Activated CD4-positive, alpha-beta memory T cell treated with anti-CD3 and anti-CD28 coated beads for 36 hours (primary cell): ENCODE measurements at regions of chr5 and their contacts with region 1.

Region 1: GRCh38 chr5:141878711-141879425 is 658 bp upstream of the PCDH1 start:
- DNase-seq: peak; percentile 92
- H3K4me3 Mint-ChIP-seq: peak overlapping the region; percentile 59
- H3K27ac Mint-ChIP-seq: no peak overlapping the region
- H3K4me1 Mint-ChIP-seq: peaks cover 22% of the 10 kb centered on the region
- H3K27me3 Mint-ChIP-seq: peaks cover 73% of the 10 kb centered on the region

Region 2: GRCh38 chr5:141618804-141619554 is 259.9 kb before region 1 on chr5 and contains the start of gene DIAPH1:
- CTCF ChIA-PET with region 1: no interaction called
- POLR2A ChIA-PET with region 1: no interaction called
- intact Hi-C with region 1: no loop called
- DNase-seq: peak; percentile 99
- H3K4me3 Mint-ChIP-seq: peak within 1 kb of the TSS; percentile 91
- H3K27ac Mint-ChIP-seq: peak within 1 kb of the TSS; percentile 98
- H3K4me1 Mint-ChIP-seq: peaks cover 57% of the 10 kb centered on the region
- H3K27me3 Mint-ChIP-seq: no peaks in the 10 kb centered on the region
- total RNA-seq, gene DIAPH1: 225 to 227 TPM

Region 3: DNA sequence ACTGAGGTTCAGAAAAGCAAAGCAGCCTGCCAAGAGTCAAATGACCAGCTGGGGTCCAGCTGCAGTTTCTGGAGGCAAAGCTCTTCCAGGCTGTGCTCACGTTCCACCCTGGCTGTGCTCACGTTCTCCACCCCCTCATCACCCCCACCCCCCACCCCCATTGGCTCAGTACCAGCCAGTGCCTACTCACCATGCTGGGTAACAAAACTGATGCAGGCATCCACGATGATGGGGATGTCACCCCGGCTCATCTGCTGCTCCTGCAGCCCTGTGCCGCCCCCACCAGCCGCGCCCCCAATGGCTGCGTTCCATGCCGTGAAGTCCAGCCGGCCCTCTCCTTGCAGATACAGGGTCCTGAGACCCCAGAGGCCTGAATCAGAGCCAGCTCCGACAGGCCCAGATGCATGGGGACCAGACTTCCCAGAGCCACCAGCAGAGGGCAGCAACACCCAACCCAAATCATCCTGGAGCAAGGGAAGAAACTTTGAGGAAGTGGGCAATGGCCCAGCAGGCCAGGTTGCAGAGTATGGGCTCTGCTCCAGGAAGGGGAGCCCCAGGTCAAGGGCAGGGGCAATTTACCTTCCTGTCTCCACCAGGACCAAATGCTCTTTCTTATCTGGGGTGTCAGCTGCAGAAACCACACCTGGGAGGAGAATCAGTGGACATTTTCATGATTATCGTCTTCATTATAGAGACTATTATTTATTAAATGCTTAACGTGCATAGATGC is 214.0 kb before region 1 on chr5:
- CTCF ChIA-PET with region 1: interaction called, 44 read pairs
- POLR2A ChIA-PET with region 1: no interaction called
- intact Hi-C with region 1: loop called (anchors 1 kb)
- DNase-seq: peak; percentile 85
- H3K4me3 Mint-ChIP-seq: no peak overlapping the region
- H3K27ac Mint-ChIP-seq: no peak overlapping the region
- H3K4me1 Mint-ChIP-seq: peaks cover 4% of the 10 kb centered on the region
- H3K27me3 Mint-ChIP-seq: no peaks in the 10 kb centered on the region

Region 4: GRCh38 chr5:141701360-141702119 is 177.3 kb before region 1 on chr5:
- CTCF ChIA-PET with region 1: interaction called, 263 read pairs
- POLR2A ChIA-PET with region 1: interaction called, 3 read pairs
- intact Hi-C with region 1: loop called (anchors 1 kb)
- DNase-seq: peak; percentile 49
- H3K4me3 Mint-ChIP-seq: peak overlapping the region; percentile 69
- H3K27ac Mint-ChIP-seq: no peak overlapping the region
- H3K4me1 Mint-ChIP-seq: peaks cover 17% of the 10 kb centered on the region
- H3K27me3 Mint-ChIP-seq: peaks cover 9% of the 10 kb centered on the region

Region 5: GRCh38 chr5:141849375-141850243 is 29.3 kb before region 1 on chr5:
- CTCF ChIA-PET with region 1: interaction called, 9 read pairs
- POLR2A ChIA-PET with region 1: no interaction called
- intact Hi-C with region 1: loop called (anchors 1 kb)
- DNase-seq: peak; percentile 84
- H3K4me3 Mint-ChIP-seq: peak overlapping the region; percentile 81
- H3K27ac Mint-ChIP-seq: peak overlapping the region; percentile 85
- H3K4me1 Mint-ChIP-seq: peaks cover 16% of the 10 kb centered on the region
- H3K27me3 Mint-ChIP-seq: no peaks in the 10 kb centered on the region

Region 6: DNA sequence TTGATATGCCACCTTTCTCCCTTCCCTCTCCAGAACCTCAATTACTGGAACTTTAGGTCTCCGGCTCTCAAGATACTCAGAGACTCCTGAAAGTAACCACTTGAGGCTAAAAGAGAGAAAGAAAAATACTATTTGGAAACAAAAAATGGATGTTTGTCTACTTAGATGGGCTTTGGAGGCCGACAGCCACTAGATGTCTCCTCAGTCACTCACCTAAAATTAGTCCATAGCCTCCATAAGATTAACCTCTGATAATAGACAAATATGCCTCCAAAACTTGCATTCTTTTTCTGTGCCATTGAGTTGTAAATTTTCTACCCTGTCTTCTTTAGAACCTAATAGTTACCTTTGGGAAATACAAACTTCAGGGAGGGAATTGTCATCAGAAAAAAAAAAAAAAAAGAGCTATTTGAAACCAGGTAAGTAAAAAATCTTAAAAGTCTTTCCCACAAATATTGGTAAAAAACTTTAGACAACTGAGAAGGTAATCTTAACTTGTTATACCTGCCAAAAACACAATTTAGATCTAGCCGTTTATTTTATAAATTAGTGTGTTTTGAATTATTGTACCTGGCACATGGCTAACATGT is 10.5 kb after region 1 on chr5:
- CTCF ChIA-PET with region 1: interaction called, 40 read pairs
- POLR2A ChIA-PET with region 1: no interaction called
- intact Hi-C with region 1: no loop called
- DNase-seq: no peak
- H3K4me3 Mint-ChIP-seq: no peak overlapping the region
- H3K27ac Mint-ChIP-seq: no peak overlapping the region
- H3K4me1 Mint-ChIP-seq: no peaks in the 10 kb centered on the region
- H3K27me3 Mint-ChIP-seq: peaks cover 25% of the 10 kb centered on the region

Region 7: GRCh38 chr5:141923448-141924352 is 44.8 kb after region 1 on chr5 and contains the start of gene DELE1:
- CTCF ChIA-PET with region 1: interaction called, 17 read pairs
- POLR2A ChIA-PET with region 1: no interaction called
- intact Hi-C with region 1: no loop called
- DNase-seq: peak; percentile 96
- H3K4me3 Mint-ChIP-seq: peak within 1 kb of the TSS; percentile 80
- H3K27ac Mint-ChIP-seq: peak within 1 kb of the TSS; percentile 96
- H3K4me1 Mint-ChIP-seq: peaks cover 18% of the 10 kb centered on the region
- H3K27me3 Mint-ChIP-seq: no peaks in the 10 kb centered on the region
- total RNA-seq, gene DELE1: 49.3 to 51.5 TPM

Region 8: GRCh38 chr5:141968914-141969608 is 90.2 kb after region 1 on chr5 and contains the start of gene RNF14:
- CTCF ChIA-PET with region 1: interaction called, 15 read pairs
- POLR2A ChIA-PET with region 1: no interaction called
- intact Hi-C with region 1: no loop called
- DNase-seq: peak; percentile 97
- H3K4me3 Mint-ChIP-seq: peak within 1 kb of the TSS; percentile 97
- H3K27ac Mint-ChIP-seq: peak within 1 kb of the TSS; percentile 96
- H3K4me1 Mint-ChIP-seq: peaks cover 28% of the 10 kb centered on the region
- H3K27me3 Mint-ChIP-seq: no peaks in the 10 kb centered on the region
- total RNA-seq, gene RNF14: 34.6 to 39.5 TPM